A673 (cell line): ENCODE measurements at regions of chr11 and their contacts with region 1.

Region 1: GRCh38 chr11:77776455-77776854 is 44.1 kb downstream of the RSF1 start:
- DNase-seq: peak; percentile 50
- H3K4me3 ChIP-seq: no peak overlapping the region
- H3K27ac ChIP-seq: no peak overlapping the region
- H3K4me1 ChIP-seq: peaks cover 14% of the 10 kb centered on the region
- H3K27me3 ChIP-seq: no peaks in the 10 kb centered on the region
- CTCF ChIP-seq: peak; percentile 59

Region 2: GRCh38 chr11:77602381-77603088 is 173.9 kb before region 1 on chr11:
- CTCF ChIA-PET with region 1: no interaction called
- POLR2A ChIA-PET with region 1: no interaction called
- intact Hi-C with region 1: no loop called
- DNase-seq: peak; percentile 86
- H3K4me3 ChIP-seq: no peak overlapping the region
- H3K27ac ChIP-seq: peak overlapping the region; percentile 44
- H3K4me1 ChIP-seq: peaks cover 18% of the 10 kb centered on the region
- H3K27me3 ChIP-seq: no peaks in the 10 kb centered on the region
- CTCF ChIP-seq: no peak

Region 3: GRCh38 chr11:78000193-78000592 is 223.7 kb after region 1 on chr11:
- CTCF ChIA-PET with region 1: interaction called, 7 read pairs
- POLR2A ChIA-PET with region 1: no interaction called
- intact Hi-C with region 1: loop called (anchors 1 kb)
- DNase-seq: peak; percentile 88
- H3K4me3 ChIP-seq: no peak overlapping the region
- H3K27ac ChIP-seq: no peak overlapping the region
- H3K4me1 ChIP-seq: no peaks in the 10 kb centered on the region
- H3K27me3 ChIP-seq: peaks cover 4% of the 10 kb centered on the region
- CTCF ChIP-seq: peak; percentile 84

Region 4: DNA sequence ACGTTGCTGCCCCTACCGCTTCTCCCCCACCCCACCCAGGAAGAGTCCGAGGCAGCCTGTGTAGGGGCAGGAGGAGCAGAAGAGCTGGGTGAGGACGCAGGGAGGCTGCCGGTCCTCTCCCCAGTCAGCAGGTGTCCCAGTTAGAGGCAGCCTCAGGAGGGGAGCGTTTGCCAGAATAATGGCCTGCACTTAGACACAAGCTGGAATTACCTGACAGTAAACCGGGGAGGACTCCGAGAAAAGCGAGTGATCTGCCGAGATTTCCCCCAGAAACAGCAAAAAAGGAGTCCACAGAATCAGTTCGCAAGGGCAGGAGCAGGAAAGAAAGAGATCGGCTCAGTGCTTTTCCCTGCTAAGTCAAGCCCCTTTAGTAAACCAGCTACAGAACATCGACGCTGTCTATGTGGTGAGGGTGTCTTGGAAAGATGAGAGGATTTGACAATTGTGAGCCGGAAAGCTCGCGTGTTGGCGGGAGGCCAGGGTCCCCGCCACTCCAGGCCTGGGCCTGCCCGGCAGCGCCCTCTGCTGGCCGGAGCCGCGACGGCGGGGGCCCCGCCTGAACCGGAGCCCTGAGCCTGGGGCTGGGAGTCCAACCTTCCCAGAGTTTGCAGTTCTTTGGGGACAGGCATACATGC is 269.5 kb after region 1 on chr11:
- CTCF ChIA-PET with region 1: no interaction called
- POLR2A ChIA-PET with region 1: no interaction called
- intact Hi-C with region 1: loop called (anchors 5 kb)
- DNase-seq: peak; percentile 91
- H3K4me3 ChIP-seq: peak overlapping the region; percentile 27
- H3K27ac ChIP-seq: no peak overlapping the region
- H3K4me1 ChIP-seq: peaks cover 18% of the 10 kb centered on the region
- H3K27me3 ChIP-seq: no peaks in the 10 kb centered on the region
- CTCF ChIP-seq: peak; percentile 100